PC-9 (cell line): ENCODE measurements at regions of chr15 and their contacts with region 1.

Region 1: GRCh38 chr15:74127260-74127953 is 3.0 kb upstream of the ISLR2 start:
- DNase-seq: peak; percentile 62 to 93
- H3K4me3 ChIP-seq: peak overlapping the region; percentile 59
- H3K27ac ChIP-seq: no peak overlapping the region
- H3K4me1 ChIP-seq: 0 out of 2 replicates have a peak, but pooled peaks cover 8% of the 10 kb centered on the region
- H3K27me3 ChIP-seq: peaks cover 18% of the 10 kb centered on the region
- CTCF ChIP-seq: peak; percentile 92

Region 2: DNA sequence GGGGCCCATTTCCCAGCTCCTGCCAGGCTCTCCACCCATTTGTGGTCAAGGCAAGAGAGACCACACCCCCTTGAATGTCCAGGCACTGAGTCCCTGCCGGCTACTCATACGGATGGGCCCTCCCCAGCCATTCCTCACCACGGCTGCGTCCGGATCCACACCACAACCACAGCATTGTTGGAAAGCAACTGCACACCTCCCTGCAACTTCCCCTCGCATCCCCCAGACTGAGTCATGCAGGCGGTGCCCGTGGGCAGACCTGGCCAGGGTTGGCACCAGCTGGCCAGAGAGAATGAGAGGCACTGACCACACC is 170.7 kb before region 1 on chr15:
- CTCF ChIA-PET with region 1: no interaction called
- POLR2A ChIA-PET with region 1: no interaction called
- intact Hi-C with region 1: loop called (anchors 5 kb)
- DNase-seq: peak; percentile 95 to 96
- H3K4me3 ChIP-seq: no peak overlapping the region; the same call in 1 of the 2 replicates
- H3K27ac ChIP-seq: peak overlapping the region; percentile 83
- H3K4me1 ChIP-seq: peaks cover 49% of the 10 kb centered on the region
- H3K27me3 ChIP-seq: no peaks in the 10 kb centered on the region
- CTCF ChIP-seq: no peak

Region 3: GRCh38 chr15:74036271-74037170 is 90.9 kb before region 1 on chr15:
- CTCF ChIA-PET with region 1: no interaction called
- POLR2A ChIA-PET with region 1: no interaction called
- intact Hi-C with region 1: no loop called
- DNase-seq: peak in 1 of 2 experiments; percentile 26
- H3K4me3 ChIP-seq: no peak overlapping the region
- H3K27ac ChIP-seq: no peak overlapping the region
- H3K4me1 ChIP-seq: peaks cover 7% of the 10 kb centered on the region; the same call in 1 of the 2 replicates
- H3K27me3 ChIP-seq: no peaks in the 10 kb centered on the region
- CTCF ChIP-seq: peak; percentile 58

Region 4: GRCh38 chr15:74053941-74054529 is 73.4 kb before region 1 on chr15:
- CTCF ChIA-PET with region 1: interaction called, 3 read pairs
- POLR2A ChIA-PET with region 1: no interaction called
- intact Hi-C with region 1: loop called (anchors 2 kb)
- DNase-seq: peak; percentile 46 to 64
- H3K4me3 ChIP-seq: no peak overlapping the region
- H3K27ac ChIP-seq: no peak overlapping the region
- H3K4me1 ChIP-seq: peaks cover 38% of the 10 kb centered on the region
- H3K27me3 ChIP-seq: no peaks in the 10 kb centered on the region
- CTCF ChIP-seq: peak; percentile 57

Region 5: DNA sequence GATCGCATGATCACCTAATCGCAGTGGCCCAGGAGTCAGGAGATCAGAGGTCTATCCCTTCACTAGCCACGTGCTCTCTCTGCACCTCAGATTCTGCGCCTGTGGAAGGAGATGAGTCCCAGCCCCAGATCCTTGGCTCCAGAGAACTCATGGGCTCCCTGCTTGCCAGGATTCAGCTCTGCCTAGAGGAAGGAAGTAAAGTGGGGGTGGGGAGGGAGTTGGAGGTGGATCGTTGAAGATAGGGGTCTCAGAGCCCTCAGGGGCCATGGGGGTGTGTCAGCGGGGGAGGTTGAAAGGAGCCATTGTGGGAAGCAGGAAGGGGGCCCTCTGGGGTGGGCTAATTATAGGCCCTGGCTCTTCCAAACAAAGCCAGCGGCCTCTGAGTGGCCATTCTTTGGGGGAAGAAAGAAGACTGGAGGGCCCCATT is 86.5 kb after region 1 on chr15:
- CTCF ChIA-PET with region 1: no interaction called
- POLR2A ChIA-PET with region 1: no interaction called
- intact Hi-C with region 1: no loop called
- DNase-seq: no peak
- H3K4me3 ChIP-seq: no peak overlapping the region
- H3K27ac ChIP-seq: peak overlapping the region; percentile 88
- H3K4me1 ChIP-seq: peaks cover 69% of the 10 kb centered on the region
- H3K27me3 ChIP-seq: no peaks in the 10 kb centered on the region
- CTCF ChIP-seq: no peak

Region 6: DNA sequence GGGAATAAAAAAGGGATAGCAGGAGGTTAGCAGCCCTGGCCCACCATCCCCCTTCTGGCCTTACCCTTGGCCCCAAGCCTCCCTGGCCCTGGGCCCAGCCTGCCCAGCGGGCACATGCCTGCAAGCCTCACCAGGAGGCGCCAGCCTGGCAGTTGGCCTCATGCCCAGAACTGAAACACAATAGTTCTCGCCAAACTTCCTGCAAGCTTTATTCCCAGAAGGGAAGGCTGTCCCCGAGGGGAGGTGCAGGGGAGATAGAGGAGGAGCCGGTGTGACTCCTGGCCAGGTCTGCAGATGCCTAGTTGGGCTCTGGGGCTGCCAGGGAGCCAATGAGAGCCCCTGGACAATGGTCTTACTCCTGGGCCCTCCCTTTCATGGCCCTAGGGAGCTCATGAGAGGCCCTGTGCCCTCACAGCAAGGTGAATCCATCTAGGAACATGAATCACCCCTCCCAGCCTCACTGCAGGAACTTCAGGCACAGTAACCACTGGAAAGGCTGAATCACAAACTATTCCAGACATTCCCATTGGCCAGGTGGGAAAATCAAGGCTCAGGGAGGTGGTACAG is 112.7 kb after region 1 on chr15:
- CTCF ChIA-PET with region 1: interaction called, 5 read pairs
- POLR2A ChIA-PET with region 1: no interaction called
- intact Hi-C with region 1: loop called (anchors 1 kb)
- DNase-seq: peak; percentile 96 to 97
- H3K4me3 ChIP-seq: no peak overlapping the region
- H3K27ac ChIP-seq: peak overlapping the region; percentile 63; the same call in 1 of the 2 replicates
- H3K4me1 ChIP-seq: peaks cover 67% of the 10 kb centered on the region
- H3K27me3 ChIP-seq: no peaks in the 10 kb centered on the region
- CTCF ChIP-seq: peak; percentile 68

Region 7: DNA sequence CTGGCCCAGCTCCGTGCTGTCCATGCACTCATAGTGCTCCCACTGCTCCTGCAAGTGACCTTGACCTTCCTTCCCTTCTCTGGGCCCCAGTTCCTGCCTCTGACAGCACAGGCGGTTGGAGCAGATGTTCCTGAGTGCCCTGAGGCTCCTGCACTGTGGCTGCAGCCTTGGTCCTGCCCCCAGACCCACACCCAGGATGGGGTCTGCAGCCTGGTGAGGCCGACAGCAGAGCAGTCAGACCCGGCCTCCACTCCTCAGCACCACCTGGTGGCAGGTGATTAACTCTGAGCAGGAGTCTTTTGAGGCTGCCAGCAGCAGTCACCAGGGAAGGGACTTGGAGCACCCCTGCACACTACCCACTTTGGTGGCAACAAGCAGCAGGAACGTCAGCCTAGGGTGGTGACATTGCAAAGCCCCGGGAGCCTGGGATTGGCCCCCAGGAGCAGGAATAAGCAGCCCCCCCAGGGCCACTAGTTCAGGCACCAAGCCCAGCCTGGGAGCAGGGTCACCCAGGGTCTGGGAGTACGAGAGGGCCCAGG is 175.5 kb after region 1 on chr15:
- CTCF ChIA-PET with region 1: interaction called, 26 read pairs
- POLR2A ChIA-PET with region 1: interaction called, 6 read pairs
- intact Hi-C with region 1: loop called (anchors 1 kb)
- DNase-seq: peak in 1 of 2 experiments; percentile 62
- H3K4me3 ChIP-seq: no peak overlapping the region
- H3K27ac ChIP-seq: no peak overlapping the region
- H3K4me1 ChIP-seq: peaks cover 6% of the 10 kb centered on the region; the same call in 1 of the 2 replicates
- H3K27me3 ChIP-seq: 0 out of 2 replicates have a peak, but pooled peaks cover 4% of the 10 kb centered on the region
- CTCF ChIP-seq: peak; percentile 84

Region 8: DNA sequence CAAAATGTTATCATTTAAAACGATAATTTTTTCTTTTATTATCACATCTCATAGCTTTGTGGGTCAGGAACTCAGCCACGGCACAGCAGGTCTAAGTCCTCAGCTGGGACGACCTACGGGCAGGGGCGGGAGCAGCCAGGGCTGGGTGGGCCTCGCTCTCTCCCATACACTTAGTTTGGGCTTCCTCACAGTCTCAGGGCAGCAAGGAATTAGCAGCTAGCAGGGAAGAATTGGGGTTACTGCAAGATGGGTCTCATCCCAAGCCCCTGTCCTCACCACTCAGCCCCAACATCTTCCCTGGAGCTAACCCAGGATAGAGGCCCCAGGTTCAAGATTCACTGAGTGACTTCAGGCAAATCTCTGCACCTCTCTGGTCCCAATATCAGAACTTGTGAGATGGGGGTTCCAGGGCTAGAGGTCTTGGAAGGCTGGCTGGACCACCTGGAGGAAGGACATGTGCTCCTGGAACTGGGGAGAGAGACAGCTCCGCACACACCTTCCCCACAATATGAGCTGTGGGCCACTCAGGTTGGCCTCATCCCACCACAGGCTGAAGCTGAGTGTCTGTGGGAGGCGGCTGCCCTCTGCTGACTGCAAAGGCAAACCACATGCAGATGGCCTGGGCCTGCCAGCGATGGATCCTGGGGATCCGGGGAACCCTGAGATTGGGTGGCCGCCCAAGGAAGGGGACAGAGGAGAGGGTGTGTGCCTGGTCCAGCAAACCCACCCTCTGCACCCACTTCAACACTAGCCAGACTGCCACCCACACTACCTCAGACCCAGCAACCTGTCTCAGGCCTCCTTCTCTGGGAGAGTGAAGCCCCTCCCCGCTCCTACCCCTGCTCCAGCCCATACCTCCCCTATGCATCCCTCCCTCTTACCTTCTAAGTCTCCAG is 195.0 kb after region 1 on chr15:
- CTCF ChIA-PET with region 1: interaction called, 5 read pairs
- POLR2A ChIA-PET with region 1: no interaction called
- intact Hi-C with region 1: loop called (anchors 1 kb)
- DNase-seq: peak; percentile 56 to 70
- H3K4me3 ChIP-seq: no peak overlapping the region
- H3K27ac ChIP-seq: no peak overlapping the region
- H3K4me1 ChIP-seq: no peaks in the 10 kb centered on the region
- H3K27me3 ChIP-seq: no peaks in the 10 kb centered on the region
- CTCF ChIP-seq: peak; percentile 91